ENCODE measurements at regions of chr10 and their contacts with region 1.

Region 1: DNA sequence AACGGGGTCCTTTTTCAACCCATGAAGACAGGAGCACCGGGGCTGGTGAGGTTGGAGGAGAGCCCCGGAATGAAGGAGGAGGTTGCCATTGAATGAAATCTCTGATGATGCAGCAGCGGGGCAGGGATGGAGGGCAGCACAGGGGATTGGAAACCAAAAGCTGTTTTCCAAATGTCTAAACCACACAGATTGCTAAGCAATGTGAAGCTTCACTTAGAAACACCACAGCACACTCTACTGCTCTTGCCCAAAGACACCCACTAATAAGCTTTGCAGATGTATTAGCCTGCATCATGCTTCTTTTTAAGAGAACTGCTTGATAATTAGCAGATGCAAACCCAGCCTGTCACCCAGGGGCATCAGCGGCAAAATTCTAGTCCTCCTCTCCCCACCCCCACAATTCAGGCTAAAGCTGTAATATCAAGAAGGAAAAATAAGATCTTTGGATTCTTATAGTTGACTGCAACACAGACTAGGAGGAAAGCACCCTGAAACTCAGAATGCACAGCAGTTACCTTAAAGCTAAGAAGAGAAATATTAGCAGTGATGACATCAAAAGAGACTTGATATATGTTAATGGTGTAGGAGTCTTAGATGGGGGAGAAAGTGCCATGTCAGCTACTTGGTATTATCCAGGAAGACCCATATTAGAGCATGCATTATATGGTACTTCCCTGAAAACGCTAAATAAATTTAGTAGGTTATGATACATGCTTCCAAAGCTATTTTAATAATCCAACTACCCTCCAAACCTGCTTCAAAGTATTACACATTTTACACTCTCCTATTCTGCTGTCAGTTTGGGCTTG is 666.7 kb downstream of the KCNMA1 start:
- DNase-seq: no peak
- ATAC-seq: no peak

Region 2: DNA sequence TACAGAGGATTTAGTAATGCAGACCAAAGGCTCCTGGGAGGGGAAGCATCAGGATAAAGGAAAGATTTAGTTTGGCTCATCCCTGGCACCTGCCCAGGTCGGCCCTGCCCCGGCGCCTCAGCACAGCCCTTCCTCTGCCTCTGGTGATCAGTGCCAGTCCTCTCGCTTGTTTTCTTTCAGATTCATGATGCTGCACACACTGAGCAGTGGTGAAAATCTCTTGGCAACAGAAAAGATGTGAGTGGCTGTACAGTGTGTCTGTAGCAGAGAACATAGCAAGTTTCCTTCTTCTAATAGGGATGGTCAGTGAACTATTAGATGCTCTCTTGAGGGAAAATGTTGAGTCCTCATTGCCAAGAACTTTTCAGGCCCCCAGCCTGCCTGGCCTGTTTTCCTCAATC is 327.4 kb before region 1 on chr10:
- intact Hi-C with region 1: loop called in 1 of 2 experiments (anchors 2 kb)
- DNase-seq: peak in 1 of 2 donors; percentile 73
- ATAC-seq: peak; percentile 9

Region 3: DNA sequence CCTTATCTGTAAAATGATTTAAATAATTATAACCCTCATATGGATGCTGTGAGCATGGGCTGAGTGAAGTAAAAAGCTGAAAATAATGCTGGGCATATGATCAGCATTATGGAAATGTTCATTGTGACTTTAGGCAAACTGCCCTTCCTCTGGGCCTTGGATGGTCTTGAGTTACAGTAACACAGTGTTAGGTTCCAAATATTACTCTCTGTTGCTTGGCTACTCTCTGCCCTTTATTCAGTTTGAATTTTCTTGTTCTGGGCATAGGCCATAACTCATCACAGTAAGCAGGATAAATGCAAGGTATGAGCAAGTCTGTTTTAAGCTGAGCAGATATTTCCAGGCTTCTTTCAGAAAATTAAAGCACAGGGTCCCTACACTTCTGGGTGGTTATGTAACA is 201.3 kb before region 1 on chr10:
- intact Hi-C with region 1: no loop called
- DNase-seq: no peak
- ATAC-seq: no peak

Region 4: DNA sequence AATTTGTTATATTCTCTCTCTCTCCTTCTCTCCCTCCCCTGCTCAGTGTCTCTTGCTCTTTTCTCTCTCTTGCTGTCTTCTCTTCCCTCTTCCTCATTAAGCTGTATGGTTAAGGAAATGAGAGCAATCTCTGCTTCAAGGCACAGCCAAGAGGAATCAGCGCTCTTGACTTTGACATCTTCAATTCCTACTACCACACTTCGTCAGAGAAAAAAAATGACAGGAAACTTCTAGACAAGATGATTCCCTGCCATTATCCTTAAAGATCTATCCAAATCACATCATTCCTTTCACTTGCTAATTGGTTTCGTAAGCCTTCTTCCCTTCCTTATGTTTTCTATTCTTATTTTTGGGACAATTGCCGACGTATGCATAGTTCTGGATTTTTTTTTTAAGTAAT is 241.7 kb after region 1 on chr10:
- intact Hi-C with region 1: no loop called
- DNase-seq: no peak
- ATAC-seq: no peak